Left ventricle myocardium superior (tissue), 1 donor: ENCODE measurements at regions of chr15 and their contacts with region 1.

Region 1: DNA sequence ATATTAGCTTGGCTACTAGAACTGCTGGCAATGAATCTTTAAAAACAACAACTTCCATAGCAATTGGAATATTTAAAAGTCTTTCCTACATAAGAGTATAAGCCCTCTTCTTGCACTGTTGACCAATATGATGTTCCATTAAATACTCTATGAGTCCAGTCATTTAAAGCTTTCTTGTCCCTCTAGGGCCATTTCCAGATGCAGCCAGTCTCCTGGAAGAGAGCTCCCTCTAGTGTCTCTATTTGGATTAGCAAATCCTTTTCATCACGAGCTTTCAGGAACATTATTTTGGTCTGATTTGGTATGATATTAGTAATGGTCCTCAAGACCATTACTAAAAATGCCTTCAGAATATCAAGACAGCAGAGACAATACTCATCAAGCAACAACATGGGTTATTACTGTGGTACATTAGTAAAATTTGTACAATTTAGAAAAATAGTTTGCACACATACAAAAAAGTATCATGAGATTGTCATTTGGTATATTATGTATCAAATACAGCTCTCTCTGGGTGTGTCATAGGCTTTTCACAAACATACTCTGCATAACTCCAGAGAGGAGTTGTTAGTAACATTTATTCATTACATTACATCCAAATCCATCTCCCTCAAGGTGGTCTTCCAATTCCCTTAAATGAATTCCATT is 101.3 kb downstream of the DPH6 start:
- DNase-seq: no peak
- ATAC-seq: peak; percentile 20

Region 2: DNA sequence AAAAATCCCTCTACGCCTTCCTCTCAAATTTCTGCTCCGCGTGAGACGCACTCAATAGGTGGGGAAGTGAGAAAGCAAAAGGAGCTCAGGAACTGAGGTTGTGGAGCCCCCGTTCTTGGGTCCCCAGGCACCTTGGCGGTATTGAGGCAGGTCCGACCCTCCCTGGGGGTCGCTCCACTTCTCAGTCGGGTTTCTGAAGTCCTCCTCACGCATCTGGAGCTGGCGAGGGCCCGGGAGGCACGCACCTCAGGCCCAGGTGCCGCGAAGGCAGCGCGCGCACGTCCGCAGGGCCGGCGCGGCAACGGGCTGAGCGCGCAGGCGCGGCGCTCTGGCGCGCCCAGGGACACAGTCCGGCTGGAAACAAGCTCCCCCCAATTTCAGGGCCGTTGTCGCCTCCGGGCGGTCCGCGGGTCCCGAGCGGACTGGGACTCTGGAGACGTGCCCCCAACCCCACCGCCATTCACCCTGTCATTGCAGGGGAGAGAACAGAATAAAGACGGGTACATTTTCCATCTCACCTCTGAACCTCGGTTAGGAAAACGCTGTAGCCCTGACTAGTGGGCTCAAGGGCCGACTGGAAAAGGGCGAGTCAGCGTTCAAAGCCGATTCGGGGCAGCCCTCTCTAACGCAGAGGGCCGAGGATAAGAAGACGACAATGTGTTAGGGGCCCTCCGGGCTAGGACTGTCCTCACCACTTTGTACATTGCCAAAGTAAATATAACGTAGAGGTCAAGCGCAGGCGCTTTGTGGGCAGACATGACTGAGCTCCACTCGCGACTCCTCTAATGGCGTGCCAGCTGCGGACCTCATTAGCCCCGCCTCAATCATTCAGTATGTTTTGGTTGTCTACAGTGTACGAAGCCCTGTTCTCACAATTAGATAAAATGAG is 456.5 kb before region 1 on chr15 and contains the start of gene ZNF770:
- intact Hi-C with region 1: no loop called
- DNase-seq: peak; percentile 85
- ATAC-seq: peak; percentile 94
- total RNA-seq, gene ZNF770: 57.1 TPM

Region 3: GRCh38 chr15:35289024-35289617 is 155.6 kb before region 1 on chr15:
- intact Hi-C with region 1: loop called (anchors 5 kb)
- DNase-seq: no peak
- ATAC-seq: peak; percentile 68